ENCODE measurements at regions of chr2 and their contacts with region 1.

Region 1: GRCh38 chr2:181891258-181891965 is at the start of gene ITPRID2:
- DNase-seq: peak; percentile 40 to 91 (median 81)

Region 2: DNA sequence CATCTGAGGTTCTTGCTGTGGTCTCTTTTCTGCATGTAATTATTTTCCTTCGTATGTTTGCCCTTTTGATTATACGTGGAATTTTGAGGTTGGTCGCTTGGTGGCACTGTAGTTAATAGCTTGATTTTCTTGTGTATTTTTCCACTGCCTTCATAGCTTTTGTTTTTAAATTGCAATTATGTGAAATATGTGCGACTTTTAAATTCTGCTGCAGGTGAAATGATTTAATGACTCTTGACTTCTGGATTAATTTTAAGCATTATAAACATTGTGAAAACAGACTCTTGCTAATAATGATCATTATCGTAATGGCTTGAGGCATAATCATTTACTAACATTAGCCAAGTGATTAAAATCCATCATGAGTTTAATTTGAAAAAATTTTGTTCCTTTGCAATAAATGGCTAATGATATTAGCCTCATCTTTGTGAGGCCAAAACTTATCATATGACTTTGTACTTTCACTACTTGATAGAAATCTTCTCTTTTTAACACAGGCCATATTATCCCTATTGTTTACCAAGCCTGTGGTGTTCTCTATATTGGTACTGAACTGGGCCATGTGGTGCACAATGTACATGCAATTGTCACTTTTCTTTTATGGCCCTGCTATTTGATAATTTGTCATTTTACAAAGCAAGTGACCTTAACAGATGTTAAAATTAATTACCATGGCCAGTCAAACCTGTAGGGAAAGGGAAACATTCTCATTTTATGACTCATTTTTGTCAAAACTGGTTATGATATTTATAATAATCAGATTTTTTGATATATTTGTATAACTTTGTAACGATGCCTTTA is 148.3 kb before region 1 on chr2:
- intact Hi-C with region 1: loop called (anchors 5 kb)
- DNase-seq: peak in 30 of 42 donors; percentile 4 to 78 (median 38)

Region 3: DNA sequence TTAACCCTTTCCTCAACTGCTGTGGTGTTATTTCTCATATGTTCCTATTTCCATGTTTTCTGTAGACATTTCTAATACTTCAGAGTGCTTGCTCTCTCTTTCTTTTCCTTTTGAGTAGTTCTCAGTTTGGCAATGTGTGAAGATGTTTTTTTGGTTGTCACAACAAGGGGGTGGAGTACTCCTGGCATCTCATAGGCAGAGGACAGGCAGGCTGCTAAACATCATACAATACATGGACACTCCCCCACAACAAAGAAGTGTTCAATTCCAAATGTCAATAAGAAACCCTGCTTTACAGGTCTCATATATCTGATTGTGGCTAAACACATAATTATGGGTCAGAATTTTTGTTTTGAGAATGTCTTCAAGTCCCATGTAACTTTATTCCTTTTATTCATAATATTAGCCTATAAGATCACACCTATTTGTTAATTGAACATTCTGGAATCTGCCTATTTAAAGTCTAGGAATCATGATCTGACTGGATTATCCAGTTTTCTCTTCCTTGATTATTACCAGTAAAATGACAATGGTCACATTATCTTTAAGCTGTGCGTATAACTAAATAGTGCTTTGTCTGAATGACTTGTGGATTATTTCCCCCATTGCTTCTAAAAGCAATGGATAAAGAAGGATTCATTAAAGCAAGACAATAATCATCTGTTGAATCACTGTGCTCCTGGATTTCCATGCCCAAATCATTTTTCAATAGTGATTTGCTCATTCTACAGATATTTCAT is 46.7 kb before region 1 on chr2:
- intact Hi-C with region 1: loop called (anchors 5 kb)
- DNase-seq: peak in 2 of 42 donors; percentile 14 to 15

Region 4: DNA sequence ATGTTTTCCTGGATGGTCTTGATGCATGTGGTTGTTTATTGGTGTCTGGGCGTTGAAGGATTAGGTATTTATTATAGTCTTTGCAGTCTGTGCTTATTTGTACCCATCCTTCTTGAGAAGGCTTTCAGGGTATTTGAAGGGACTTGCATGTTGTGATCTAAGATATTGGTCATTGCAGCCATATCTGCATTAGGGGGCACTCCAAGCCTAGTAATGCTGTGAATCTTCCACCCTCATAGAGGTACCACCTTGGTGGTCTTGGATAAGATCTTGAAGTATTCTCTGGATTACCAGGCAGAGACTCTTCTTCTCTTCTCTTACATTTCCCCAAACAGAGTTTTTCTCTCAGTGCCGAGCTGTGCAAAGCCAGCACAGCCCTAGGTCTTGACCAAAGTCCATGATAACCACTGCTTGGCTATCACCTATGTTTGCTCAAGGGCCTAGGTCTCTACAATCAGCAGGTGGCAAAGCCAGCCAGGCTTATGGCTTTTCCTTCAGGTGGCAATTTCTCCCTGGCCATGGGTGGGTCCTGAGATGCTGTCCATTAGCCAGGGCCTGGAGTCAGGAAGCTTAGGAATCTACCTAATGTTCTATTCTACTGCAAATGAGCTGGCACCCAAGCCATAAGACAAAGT is 78.9 kb after region 1 on chr2:
- intact Hi-C with region 1: no loop called
- DNase-seq: no peak